PC-3 (cell line): ENCODE measurements at regions of chr14 and their contacts with region 1.

Region 1: GRCh38 chr14:25132732-25133422 is 82.9 kb upstream of the STXBP6 start:
- DNase-seq: peak; percentile 57
- ATAC-seq: peak; percentile 68
- H3K4me3 ChIP-seq: no peak overlapping the region
- H3K27ac ChIP-seq: no peak overlapping the region
- H3K4me1 ChIP-seq: no peaks in the 10 kb centered on the region
- H3K27me3 ChIP-seq: no peaks in the 10 kb centered on the region
- CTCF ChIP-seq: peak; percentile 71

Region 2: DNA sequence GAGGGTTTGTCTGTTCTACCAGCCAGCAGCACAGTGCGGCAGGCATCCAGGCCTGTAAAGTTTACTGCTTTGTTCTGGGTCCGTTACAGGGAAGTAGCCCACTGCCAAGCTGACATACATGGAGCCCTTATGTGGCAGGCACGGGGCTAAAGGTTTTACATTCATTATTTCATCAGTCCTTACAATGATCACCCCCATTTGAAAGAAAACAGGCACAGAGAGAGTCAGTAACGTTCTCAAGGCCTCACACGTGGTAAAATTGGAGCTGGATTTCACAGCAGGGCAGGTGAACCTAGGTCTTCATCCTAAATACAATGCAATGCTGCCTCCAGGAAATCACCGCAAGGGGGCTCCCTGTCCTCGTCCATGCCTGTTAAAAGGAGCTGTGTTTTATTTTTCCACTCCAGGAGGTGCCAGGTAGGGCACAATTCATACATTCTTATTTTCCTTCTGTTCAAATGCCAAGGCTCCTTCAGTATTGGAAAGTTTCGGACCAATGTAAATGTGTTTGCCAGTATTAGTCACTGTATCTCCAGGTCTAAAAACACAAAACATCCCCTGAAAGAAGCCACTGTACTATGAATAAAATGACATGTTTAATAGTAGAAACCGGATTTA is 326.7 kb before region 1 on chr14:
- CTCF ChIA-PET with region 1: no interaction called
- POLR2A ChIA-PET with region 1: no interaction called
- intact Hi-C with region 1: loop called (anchors 2 kb)
- DNase-seq: peak; percentile 70
- ATAC-seq: peak; percentile 53; the same call in 1 of the 2 replicates
- H3K4me3 ChIP-seq: no peak overlapping the region
- H3K27ac ChIP-seq: no peak overlapping the region
- H3K4me1 ChIP-seq: no peaks in the 10 kb centered on the region
- H3K27me3 ChIP-seq: peaks cover 11% of the 10 kb centered on the region
- CTCF ChIP-seq: peak; percentile 89